ENCODE measurements at regions of chr1 and their contacts with region 1.

Region 1: GRCh38 chr1:198937231-198938031 is 298.6 kb downstream of the PTPRC start:
- DNase-seq: peak in 4 of 5 donors; percentile 27 to 72 (median 45)
- ATAC-seq: peak; percentile 96 to 99 (median 98)
- H3K4me3 ChIP-seq: peak overlapping the region; percentile 33 to 75 (median 62)
- H3K27ac ChIP-seq: peak overlapping the region; percentile 11 to 91 (median 74)
- H3K4me1 ChIP-seq: peaks cover 0 to 28% (median 17%) of the 10 kb centered on the region in 12 donors
- H3K27me3 ChIP-seq: no peaks in the 10 kb centered on the region
- CTCF ChIP-seq: no peak
- POLR2A ChIP-seq: peak in 1 of 2 donors; percentile 84

Region 2: DNA sequence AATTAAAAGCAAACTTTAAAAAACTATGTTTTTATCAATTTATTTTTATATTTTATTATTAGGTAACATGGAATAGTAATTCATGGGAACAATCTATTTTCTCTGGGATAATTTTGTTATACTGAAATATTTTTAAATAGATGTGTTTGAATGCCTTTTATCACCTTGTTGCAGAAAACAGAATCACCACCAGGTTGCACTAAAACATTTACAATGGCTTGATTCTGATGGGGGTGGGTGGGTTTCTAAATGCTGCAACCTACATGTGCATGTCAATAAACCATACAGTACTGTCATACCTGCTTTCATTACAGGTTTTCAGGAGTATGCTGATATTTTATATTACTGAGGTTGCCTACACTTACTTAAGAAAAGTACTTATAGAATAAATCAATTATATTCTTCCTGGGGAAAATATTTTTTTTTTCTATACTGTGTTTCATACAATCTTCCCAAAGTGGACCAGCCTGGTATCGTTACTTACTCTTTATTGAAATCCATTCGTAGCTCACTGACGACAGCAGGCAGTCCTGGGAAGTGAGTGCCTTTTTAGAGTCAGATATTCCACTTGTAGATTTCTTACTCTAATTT is 165.8 kb before region 1 on chr1:
- intact Hi-C with region 1: loop called in 3 of 10 experiments (anchors 5 to 10 kb)
- DNase-seq: no peak
- ATAC-seq: no peak
- H3K4me3 ChIP-seq: no peak overlapping the region
- H3K27ac ChIP-seq: no peak overlapping the region
- H3K4me1 ChIP-seq: peaks cover 0 to 22% (median 0%) of the 10 kb centered on the region in 12 donors
- H3K27me3 ChIP-seq: no peaks in the 10 kb centered on the region
- CTCF ChIP-seq: peak; percentile 16 to 53 (median 43)
- POLR2A ChIP-seq: no peak

Region 3: DNA sequence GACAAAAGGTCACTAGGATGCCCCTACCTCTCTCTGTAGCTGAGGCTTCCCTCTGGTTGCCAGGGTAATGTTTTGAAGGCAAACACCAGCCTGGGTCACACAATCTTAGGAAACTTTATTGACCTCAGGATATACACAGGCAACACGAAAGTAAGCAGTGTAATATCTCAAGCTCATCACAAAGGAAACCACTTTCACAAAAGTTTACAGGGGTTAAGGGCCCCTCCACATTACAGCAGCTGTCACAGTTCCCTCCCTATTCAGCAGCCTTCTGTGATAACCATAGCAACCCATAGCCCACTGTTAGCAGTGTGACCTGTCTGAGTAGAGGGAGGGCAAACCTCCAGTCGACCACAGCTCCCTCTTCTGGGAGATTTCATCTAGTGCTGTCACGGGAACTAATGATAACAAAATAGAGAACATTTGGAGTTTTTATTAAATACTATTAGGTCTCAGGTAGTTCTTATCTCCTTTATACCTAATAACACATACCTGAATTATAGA is 148.8 kb before region 1 on chr1:
- intact Hi-C with region 1: loop called in 1 of 10 experiments (anchors 10 kb)
- DNase-seq: no peak
- ATAC-seq: peak in 1 of 4 donors; percentile 39
- H3K4me3 ChIP-seq: no peak overlapping the region
- H3K27ac ChIP-seq: no peak overlapping the region
- H3K4me1 ChIP-seq: peaks cover 0 to 5% (median 0%) of the 10 kb centered on the region in 12 donors
- H3K27me3 ChIP-seq: no peaks in the 10 kb centered on the region
- CTCF ChIP-seq: peak in 4 of 12 donors; percentile 7 to 17 (median 10)
- POLR2A ChIP-seq: no peak

Region 4: DNA sequence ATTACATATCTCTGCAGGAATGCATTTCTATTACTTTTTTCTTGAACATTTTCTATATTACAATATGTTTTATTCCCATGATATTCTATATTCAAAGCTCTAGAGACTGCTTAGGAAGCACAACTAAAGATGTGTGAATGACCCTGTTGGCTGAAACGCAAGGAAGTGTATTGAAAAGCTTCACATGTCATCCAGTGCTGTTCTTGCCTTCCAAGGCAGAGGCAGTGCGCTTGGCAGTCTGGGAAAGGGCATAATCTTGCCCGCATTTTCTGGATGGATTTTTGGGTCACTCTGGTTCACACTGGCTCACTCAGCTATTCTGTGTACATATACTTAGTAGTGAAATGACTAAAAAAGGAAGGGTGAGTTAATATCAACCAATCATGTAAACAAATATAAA is 36.2 kb before region 1 on chr1:
- intact Hi-C with region 1: loop called in 1 of 10 experiments (anchors 2 kb)
- DNase-seq: no peak
- ATAC-seq: no peak
- H3K4me3 ChIP-seq: no peak overlapping the region
- H3K27ac ChIP-seq: no peak overlapping the region
- H3K4me1 ChIP-seq: peaks cover 0 to 41% (median 23%) of the 10 kb centered on the region in 12 donors
- H3K27me3 ChIP-seq: no peaks in the 10 kb centered on the region
- CTCF ChIP-seq: no peak
- POLR2A ChIP-seq: no peak

Measured in heart left ventricle (tissue), 16 donors.